ENCODE measurements at regions of chr10 and their contacts with region 1.

Region 1: DNA sequence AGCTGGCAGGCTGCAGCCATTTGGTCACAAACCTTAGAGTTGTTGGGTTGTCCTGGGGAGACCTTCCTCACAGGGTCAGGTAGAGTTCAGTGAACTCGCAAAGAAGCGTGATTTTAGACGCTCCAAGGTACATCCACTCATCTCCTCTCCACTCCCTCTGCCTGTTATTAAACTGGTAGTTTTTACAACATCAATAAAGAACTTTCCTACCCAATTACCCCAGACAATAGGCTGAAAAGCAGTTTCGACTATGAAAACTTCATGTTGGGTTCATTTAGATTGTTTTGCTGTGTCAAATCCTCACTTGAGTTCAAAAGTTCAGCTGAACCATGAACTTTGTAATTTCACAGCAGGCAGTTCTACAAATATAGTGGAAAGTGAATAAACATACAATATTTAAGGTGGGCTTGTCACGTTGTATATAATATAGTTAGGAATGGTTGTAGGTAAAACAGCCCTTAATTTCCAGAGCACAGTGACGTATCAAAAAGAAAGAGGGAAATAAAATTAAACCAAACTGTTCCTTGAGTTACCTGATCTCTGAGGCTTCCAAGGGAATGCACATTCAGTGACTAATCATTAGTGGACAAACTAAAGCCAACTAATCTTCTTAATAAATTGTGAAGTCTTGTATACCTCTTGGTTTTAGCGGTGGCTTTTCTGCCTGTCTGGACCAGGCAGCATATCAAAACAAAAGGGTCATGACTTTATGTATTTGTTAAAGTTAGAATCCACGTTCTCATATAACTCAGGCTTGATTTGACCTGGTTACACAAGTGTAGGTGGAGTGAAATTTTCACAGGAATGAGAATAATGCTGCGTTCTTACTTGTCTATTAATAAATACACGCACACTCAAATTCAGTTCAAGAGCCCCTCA is 100.5 kb downstream of the CYP26A1 start:
- DNase-seq: peak in 1 of 3 donors; percentile 60
- ATAC-seq: peak; percentile 90 to 92 (median 91)
- H3K4me3 ChIP-seq: peak overlapping the region in 2 of 3 donors; percentile 3 to 12
- H3K27ac ChIP-seq: peak overlapping the region in 2 of 3 donors; percentile 71 to 74
- H3K4me1 ChIP-seq: peaks cover 0 to 35% (median 14%) of the 10 kb centered on the region in 4 donors
- H3K27me3 ChIP-seq: no peaks in the 10 kb centered on the region
- CTCF ChIP-seq: no peak
- POLR2A ChIP-seq: no peak

Region 2: DNA sequence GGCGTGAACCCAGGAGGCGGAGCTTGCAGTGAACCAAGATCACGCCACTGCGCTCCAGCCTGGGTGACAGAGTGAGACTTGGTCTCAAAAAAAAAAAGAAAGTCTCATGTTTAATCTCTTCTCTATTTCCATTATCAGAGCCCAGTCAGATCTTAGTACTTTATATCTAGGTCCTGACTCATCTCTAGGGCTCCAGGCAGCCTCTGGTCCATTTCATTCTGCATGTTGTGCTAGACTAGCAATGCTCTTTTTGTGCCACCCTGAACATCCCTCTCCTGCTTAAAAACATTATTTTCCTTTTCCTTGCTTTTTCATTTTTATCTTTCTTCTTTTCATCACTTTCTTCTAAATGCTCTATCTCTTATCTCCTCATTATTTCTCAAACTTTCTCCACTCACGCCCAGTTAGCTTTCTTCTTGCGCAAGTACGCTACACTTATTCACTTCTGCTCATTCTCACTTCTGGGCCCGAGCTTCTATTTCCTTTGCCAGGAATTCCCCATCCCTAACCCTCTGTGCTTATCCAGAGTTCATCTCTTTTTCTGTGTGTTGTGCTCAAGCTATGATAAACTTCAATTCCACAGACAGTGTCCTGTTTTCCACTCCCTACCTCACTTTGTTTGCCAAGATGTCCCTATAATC is 1186.7 kb before region 1 on chr10:
- intact Hi-C with region 1: no loop called
- DNase-seq: no peak
- ATAC-seq: no peak
- H3K4me3 ChIP-seq: no peak overlapping the region
- H3K27ac ChIP-seq: no peak overlapping the region
- H3K4me1 ChIP-seq: no peaks in the 10 kb centered on the region
- H3K27me3 ChIP-seq: no peaks in the 10 kb centered on the region
- CTCF ChIP-seq: no peak
- POLR2A ChIP-seq: no peak

Region 3: DNA sequence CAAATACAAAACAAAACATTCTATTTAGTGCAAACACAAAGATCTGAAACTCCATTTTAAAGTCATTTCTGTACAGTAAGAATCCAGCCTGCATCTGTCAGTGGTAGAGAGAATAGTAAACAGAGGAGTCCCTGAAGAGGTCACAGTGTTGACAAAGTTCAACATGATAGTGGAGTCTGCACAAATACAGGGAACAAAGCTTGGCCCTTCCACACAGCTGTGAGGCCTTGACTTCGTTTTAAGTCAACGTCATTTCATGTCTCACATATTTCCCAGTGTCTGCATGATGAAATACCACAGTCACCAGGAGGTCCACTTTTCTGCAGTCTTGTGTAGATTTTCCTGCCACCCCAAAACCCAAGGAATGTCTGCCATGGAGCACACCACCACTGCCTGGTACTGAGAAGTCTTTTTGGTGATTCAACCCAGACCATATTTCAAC is 67.6 kb before region 1 on chr10:
- intact Hi-C with region 1: no loop called
- DNase-seq: no peak
- ATAC-seq: peak; percentile 91 to 100 (median 96)
- H3K4me3 ChIP-seq: no peak overlapping the region
- H3K27ac ChIP-seq: peak overlapping the region in 1 of 3 donors; percentile 48
- H3K4me1 ChIP-seq: peaks cover 0 to 14% (median 1%) of the 10 kb centered on the region in 4 donors
- H3K27me3 ChIP-seq: no peaks in the 10 kb centered on the region
- CTCF ChIP-seq: no peak
- POLR2A ChIP-seq: no peak

Region 4: DNA sequence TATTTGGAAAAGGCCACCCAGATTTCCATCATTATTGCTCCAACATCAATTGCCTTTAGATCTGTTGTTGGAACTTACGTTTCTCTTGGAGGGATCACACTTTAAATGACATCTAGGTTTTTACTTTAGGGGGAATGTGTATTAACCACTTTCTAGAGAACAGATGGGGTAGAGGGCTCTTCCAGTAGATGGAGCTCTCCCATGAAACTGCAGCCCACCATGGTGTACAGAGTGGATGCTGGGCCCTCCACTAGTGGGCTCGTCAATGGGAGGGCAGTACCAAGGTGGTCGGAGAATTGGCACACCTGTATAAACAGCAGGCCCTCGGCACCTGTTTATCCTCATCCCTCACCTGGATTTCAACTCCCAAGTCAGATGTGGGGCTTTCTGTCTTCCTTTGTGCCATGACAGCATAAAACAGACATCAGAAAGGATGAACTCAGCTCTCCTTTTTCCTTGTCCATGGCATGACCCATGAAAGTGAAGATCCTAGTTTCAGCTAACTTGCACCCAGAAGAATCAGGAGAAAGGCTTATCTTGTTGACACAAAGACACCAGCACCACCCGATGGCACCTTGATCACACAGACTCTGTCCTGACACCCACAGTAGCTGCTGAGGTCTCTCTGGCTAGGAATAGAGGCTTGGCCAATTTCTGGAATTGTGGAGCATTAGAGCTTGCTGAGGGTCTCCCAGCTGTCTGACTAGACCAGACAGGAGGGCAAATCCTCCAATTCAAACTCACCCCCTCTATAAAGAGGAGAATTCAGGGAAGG is 50.0 kb after region 1 on chr10:
- intact Hi-C with region 1: loop called in 1 of 2 experiments (anchors 10 kb)
- DNase-seq: no peak
- ATAC-seq: peak in 2 of 4 donors; percentile 23 to 34
- H3K4me3 ChIP-seq: no peak overlapping the region
- H3K27ac ChIP-seq: no peak overlapping the region
- H3K4me1 ChIP-seq: peaks cover 0 to 64% (median 17%) of the 10 kb centered on the region in 4 donors
- H3K27me3 ChIP-seq: no peaks in the 10 kb centered on the region
- CTCF ChIP-seq: peak in 1 of 4 donors; percentile 34
- POLR2A ChIP-seq: no peak